ENCODE measurements at regions of chr16 and their contacts with region 1.

Region 1: GRCh38 chr16:22190081-22190775 is 15.8 kb upstream of the EEF2K start:
- DNase-seq: no peak
- ATAC-seq: peak; percentile 75
- H3K4me3 ChIP-seq: peak overlapping the region; percentile 51 to 67
- H3K27ac ChIP-seq: peak overlapping the region; percentile 67
- H3K4me1 ChIP-seq: peaks cover 20 to 32% of the 10 kb centered on the region in 2 experiments
- H3K27me3 ChIP-seq: no peaks in the 10 kb centered on the region
- CTCF ChIP-seq: no peak
- POLR2A ChIP-seq: no peak
- RAD21 ChIP-seq: no peak

Region 2: DNA sequence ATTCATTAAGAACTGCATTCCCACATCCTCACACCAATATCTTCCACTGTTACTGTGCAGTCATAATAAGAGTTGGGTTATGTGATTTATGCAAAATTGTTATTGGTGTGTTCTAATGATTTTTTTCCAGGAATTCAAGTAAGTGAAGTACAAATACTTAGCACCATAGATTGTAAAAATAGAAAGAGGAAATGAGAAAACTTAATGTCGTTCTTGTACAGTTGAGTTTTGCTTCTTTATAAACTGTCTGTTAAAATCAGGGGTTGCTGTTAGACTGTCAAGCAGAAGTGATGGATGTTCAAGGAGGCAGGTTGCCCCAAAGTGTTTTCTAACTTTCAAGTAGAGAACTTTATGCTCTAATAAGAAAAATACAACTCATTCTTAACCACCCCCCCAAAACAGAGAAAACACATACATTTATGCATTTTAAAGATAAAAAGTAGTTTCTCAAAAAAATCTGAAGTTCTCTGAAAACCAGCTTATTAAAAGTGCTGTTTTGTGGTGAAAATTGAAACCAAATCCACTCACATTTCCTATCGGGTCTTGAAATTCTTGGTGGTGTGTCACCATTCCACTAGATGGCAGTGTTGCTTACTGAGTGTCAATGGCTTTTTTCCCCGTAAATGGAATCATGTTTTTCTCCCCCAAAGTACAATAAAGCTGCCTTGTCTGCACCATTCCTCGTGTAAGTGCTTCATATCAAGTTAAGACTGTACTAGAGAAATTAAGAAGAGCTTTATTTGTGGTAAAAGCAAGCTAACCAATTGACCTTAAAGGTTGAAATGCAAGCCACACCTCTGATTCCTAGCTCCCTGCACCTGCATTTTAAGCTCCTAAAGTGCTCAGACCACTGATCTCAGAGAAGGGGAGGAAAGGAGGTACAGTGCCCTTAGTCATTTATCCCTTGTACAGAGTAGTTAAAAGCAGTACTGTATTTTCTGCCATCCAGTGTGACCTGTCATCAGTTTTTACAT is 533.1 kb before region 1 on chr16:
- CTCF ChIA-PET with region 1: interaction called, 6 read pairs
- POLR2A ChIA-PET with region 1: no interaction called
- RAD21 ChIA-PET with region 1: no interaction called
- intact Hi-C with region 1: loop called (anchors 10 kb)
- DNase-seq: peak; percentile 6
- ATAC-seq: no peak
- H3K4me3 ChIP-seq: no peak overlapping the region
- H3K27ac ChIP-seq: no peak overlapping the region
- H3K4me1 ChIP-seq: no peaks in the 10 kb centered on the region
- H3K27me3 ChIP-seq: no peaks in the 10 kb centered on the region
- CTCF ChIP-seq: peak; percentile 39 to 71 (median 57); a peak in 5 of 6 replicates
- POLR2A ChIP-seq: no peak
- RAD21 ChIP-seq: peak; percentile 59

Region 3: GRCh38 chr16:22001591-22001990 is 188.6 kb before region 1 on chr16:
- CTCF ChIA-PET with region 1: interaction called, 15 read pairs
- POLR2A ChIA-PET with region 1: interaction called, 5 read pairs
- RAD21 ChIA-PET with region 1: interaction called, 4 to 7 read pairs
- intact Hi-C with region 1: loop called (anchors 1 kb)
- DNase-seq: no peak
- ATAC-seq: peak; percentile 11; the same call in 1 of the 2 replicates
- H3K4me3 ChIP-seq: peak overlapping the region in 1 of 2 experiments; percentile 34; a peak in 1 of 4 replicates
- H3K27ac ChIP-seq: no peak overlapping the region
- H3K4me1 ChIP-seq: peaks cover 16 to 29% of the 10 kb centered on the region in 2 experiments
- H3K27me3 ChIP-seq: no peaks in the 10 kb centered on the region
- CTCF ChIP-seq: no peak
- POLR2A ChIP-seq: no peak
- RAD21 ChIP-seq: no peak

Region 4: DNA sequence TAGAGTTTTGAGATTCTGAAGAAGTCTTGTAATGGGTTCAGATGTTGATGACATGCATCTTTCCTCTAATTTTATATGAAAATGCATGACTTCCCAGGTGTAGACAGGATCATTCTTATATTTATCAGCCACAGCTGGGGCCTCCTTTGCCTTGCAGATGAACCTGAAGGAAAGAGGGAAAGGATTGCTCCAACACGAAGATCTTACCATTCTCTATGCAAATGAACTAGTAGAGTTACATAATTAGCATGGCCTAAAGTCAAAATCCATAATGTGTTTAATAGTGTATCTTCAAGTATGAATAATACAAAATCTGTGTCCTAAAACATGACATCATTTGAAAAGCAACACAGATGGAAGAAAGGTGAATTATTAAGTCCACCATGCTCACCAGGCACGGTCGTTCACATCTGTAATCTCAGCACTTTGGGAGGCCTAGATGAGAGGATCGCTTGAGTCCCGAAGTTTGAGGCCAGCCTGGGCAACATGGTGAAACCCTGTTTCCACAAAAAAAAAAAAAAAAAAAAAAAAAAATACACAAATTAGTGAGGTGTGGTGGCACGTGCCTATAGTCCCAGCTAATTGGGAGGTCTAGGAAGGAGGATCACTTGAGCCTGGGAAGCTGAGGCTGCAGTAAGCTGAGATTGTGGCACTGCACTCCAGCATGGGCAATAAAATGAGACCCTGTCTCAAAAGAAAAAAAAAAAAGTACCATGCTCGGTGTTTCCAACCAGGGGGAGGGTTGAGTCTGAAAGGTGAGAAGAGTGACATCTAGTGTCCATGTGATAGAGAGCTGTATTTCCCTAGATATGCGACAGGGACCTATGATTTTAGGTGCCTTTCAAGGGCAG is 91.6 kb before region 1 on chr16:
- CTCF ChIA-PET with region 1: interaction called, 13 read pairs
- POLR2A ChIA-PET with region 1: no interaction called
- RAD21 ChIA-PET with region 1: interaction called in 1 of 2 experiments, 4 read pairs
- intact Hi-C with region 1: no loop called
- DNase-seq: peak; percentile 56
- ATAC-seq: peak; percentile 99
- H3K4me3 ChIP-seq: no peak overlapping the region
- H3K27ac ChIP-seq: no peak overlapping the region
- H3K4me1 ChIP-seq: peaks cover 0 to 11% of the 10 kb centered on the region in 2 experiments; a peak in 2 of 4 replicates
- H3K27me3 ChIP-seq: no peaks in the 10 kb centered on the region
- CTCF ChIP-seq: peak; percentile 66 to 78 (median 76); a peak in 5 of 6 replicates
- POLR2A ChIP-seq: no peak
- RAD21 ChIP-seq: peak; percentile 82

Region 5: GRCh38 chr16:22948603-22949368 is 758.6 kb after region 1 on chr16:
- CTCF ChIA-PET with region 1: no interaction called
- POLR2A ChIA-PET with region 1: no interaction called
- RAD21 ChIA-PET with region 1: no interaction called
- intact Hi-C with region 1: loop called (anchors 5 kb)
- DNase-seq: peak; percentile 82
- ATAC-seq: peak; percentile 98
- H3K4me3 ChIP-seq: no peak overlapping the region
- H3K27ac ChIP-seq: no peak overlapping the region
- H3K4me1 ChIP-seq: no peaks in the 10 kb centered on the region
- H3K27me3 ChIP-seq: peaks cover 21% of the 10 kb centered on the region
- CTCF ChIP-seq: peak; percentile 72 to 87 (median 80)
- POLR2A ChIP-seq: no peak
- RAD21 ChIP-seq: peak; percentile 82

Region 6: DNA sequence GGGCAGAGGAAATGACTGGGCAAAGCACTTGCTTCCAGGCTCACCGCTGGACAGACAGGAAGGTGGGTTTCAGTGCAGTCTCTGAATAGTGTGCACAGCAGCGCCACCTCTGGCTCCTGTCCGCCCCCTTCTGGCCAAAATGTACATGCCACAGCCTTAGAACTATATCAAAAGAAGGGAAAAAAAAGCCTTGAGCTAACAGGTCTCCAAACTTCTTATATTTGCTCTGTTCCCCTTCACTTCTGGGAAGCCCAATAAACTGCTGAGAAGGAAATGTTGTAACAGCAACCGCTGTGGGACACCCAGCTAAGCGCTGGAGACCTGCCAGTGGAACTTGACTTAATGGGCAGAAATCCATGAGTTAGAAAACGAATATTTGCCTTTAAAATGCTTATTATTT is 1245.3 kb after region 1 on chr16:
- CTCF ChIA-PET with region 1: no interaction called
- POLR2A ChIA-PET with region 1: no interaction called
- RAD21 ChIA-PET with region 1: no interaction called
- intact Hi-C with region 1: loop called (anchors 10 kb)
- DNase-seq: peak; percentile 49
- ATAC-seq: peak; percentile 99
- H3K4me3 ChIP-seq: no peak overlapping the region
- H3K27ac ChIP-seq: no peak overlapping the region
- H3K4me1 ChIP-seq: no peaks in the 10 kb centered on the region
- H3K27me3 ChIP-seq: no peaks in the 10 kb centered on the region
- CTCF ChIP-seq: peak; percentile 95 to 98 (median 96)
- POLR2A ChIP-seq: no peak
- RAD21 ChIP-seq: peak; percentile 58